ENCODE measurements at regions of chr16 and their contacts with region 1.

Region 1: DNA sequence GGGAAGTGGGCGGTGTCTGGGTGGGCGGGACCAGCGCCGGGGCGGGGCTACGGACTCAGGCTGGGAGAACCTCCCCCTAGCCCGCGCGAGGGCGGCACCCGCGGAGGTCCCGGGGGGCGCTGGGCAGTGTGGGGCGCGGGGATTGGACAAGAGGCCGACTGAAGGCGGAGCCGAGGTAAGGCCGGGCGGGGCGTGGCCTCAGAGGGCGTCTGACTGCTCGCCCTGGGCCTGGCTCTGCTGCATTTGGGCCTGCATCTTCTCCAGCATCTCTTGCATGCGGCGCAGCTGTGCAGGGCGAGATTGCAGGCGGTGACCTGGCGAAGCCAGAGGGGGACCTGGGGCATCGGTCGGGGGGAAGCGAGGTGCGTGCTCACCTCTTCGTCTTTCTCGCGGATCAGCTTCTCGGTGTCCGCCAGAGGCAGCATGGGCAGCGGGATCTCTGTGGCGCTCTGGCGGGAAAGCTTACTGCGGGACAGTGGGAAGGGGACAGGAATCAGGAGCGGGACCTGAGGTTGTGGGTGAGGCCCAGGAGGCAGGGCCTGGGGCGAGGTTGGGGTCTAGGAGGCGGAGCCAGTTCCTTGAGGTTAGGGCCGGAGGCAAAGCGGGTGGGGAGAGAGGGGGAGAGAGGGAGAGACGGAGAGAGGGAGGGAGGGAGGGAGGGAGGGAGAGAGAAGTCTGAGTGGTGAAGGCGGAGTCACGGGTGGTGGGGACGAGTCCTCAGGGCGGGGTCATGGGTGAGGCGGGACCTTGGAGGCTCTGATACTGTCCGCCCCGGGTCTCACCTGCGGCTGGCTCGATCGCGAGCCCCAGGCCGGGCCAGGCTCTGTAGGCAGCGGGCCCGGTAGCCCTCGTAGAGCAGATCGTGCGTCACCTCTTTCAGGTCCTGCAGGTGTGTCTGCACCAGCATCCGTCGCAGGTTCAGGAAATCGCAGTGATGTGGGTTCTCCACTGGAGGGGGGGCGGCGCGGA is 3.8 kb downstream of the SEPTIN1 start:
- DNase-seq: peak; percentile 96 to 100
- H3K4me3 ChIP-seq: peak overlapping the region; percentile 67 to 88
- H3K27ac ChIP-seq: peak overlapping the region; percentile 99 to 100
- H3K4me1 ChIP-seq: peaks cover 8 to 9% of the 10 kb centered on the region in 2 donors
- H3K27me3 ChIP-seq: no peaks in the 10 kb centered on the region
- CTCF ChIP-seq: peak in 2 of 3 experiments; percentile 6 to 28

Region 2: GRCh38 chr16:30052671-30053372 is 325.7 kb before region 1 on chr16:
- intact Hi-C with region 1: no loop called
- DNase-seq: peak in 1 of 2 donors; percentile 94
- H3K4me3 ChIP-seq: peak overlapping the region; percentile 79 to 88
- H3K27ac ChIP-seq: peak overlapping the region; percentile 41 to 59
- H3K4me1 ChIP-seq: peaks cover 0 to 12% of the 10 kb centered on the region in 2 donors
- H3K27me3 ChIP-seq: no peaks in the 10 kb centered on the region
- CTCF ChIP-seq: no peak

Region 3: GRCh38 chr16:30335598-30336474 is 42.7 kb before region 1 on chr16:
- intact Hi-C with region 1: loop called (anchors 2 kb)
- DNase-seq: no peak
- H3K4me3 ChIP-seq: peak overlapping the region; percentile 86 to 87
- H3K27ac ChIP-seq: peak overlapping the region; percentile 96 to 97
- H3K4me1 ChIP-seq: peaks cover 0 to 5% of the 10 kb centered on the region in 2 donors
- H3K27me3 ChIP-seq: no peaks in the 10 kb centered on the region
- CTCF ChIP-seq: no peak

Region 4: DNA sequence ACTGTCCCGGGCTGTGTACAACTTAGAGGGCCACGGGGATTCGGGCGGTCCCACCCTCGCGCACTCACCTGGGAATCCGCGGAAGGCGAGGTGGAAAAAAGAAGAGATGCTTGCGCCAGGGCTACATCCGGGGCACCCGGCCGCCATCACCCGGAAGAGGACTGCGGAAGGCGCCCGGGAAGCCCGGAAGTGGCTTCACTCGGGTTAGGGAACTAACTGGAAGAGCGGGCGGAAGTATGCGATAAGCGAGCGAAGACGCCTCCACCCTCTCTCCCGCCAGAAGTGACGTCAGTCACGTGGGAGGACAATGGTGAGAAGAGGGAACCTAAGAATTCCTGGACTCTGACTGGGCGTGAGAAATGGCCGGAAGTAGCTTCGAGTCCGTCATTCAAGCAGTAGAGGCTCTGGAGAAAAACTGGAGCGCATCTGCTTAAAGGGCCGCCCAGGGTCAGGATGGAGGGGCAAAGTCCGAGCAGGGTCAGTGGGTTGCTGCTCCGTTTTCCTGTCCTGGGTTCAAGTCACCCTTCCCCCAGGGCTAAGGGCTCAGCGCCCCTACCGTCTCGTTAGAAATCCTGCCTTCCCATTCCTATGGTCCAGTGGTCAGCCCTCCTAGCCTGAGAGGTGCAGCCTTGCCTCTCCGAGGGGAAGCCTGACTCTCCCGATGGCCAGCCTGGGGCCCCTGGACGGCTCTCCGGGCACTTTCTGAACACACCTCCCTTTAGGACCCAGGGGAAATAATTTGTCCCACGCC is 23.2 kb before region 1 on chr16 and contains the start of gene CD2BP2:
- intact Hi-C with region 1: loop called (anchors 1 kb)
- DNase-seq: peak; percentile 84 to 99
- H3K4me3 ChIP-seq: peak within 1 kb of the TSS; percentile 72 to 87
- H3K27ac ChIP-seq: peak within 1 kb of the TSS; percentile 95 to 98
- H3K4me1 ChIP-seq: peaks cover 10 to 42% of the 10 kb centered on the region in 2 donors
- H3K27me3 ChIP-seq: no peaks in the 10 kb centered on the region
- CTCF ChIP-seq: peak in 1 of 3 experiments; percentile 5
- total RNA-seq, gene CD2BP2: 15.1 TPM

Region 5: GRCh38 chr16:30407102-30407803 is 28.7 kb after region 1 on chr16 and contains the start of gene ZNF771:
- intact Hi-C with region 1: loop called (anchors 1 kb)
- DNase-seq: peak; percentile 70 to 95
- H3K4me3 ChIP-seq: peak within 1 kb of the TSS; percentile 67 to 82
- H3K27ac ChIP-seq: peak within 1 kb of the TSS; percentile 79 to 94
- H3K4me1 ChIP-seq: peaks cover 8 to 16% of the 10 kb centered on the region in 2 donors
- H3K27me3 ChIP-seq: no peaks in the 10 kb centered on the region
- CTCF ChIP-seq: peak in 1 of 3 experiments; percentile 4
- total RNA-seq, gene ZNF771: 49.6 TPM